ENCODE measurements at regions of chr18 and their contacts with region 1.

Region 1: DNA sequence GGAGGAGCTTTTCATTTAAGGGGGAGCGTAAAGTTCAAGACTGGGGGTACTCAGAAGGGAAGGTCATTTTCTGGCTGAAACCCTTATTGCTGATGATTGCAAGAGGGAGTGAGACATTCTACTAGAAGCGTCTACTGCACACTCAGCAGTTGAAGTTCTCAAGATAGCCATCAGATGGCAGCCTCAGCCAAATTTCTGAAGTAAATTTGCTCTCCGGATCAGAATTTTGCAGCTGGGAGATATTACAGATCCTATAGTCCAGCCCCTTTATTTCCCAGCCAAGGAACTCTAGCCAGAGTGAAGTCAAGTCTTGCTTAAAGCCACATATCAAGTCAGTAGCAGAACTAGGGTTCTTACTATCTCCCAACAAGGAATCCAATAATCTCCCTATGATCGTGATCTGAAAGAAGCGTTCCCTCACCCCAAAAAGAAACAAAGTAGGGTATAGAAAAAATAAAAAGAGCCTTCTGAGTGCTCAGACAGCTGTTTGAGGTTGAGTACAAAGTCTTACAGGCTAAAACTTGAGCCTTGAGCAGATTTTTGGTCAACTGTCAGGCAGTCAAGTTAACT is 24.0 kb downstream of the RAX start:
- DNase-seq: no peak
- H3K4me3 ChIP-seq: no peak overlapping the region
- H3K27ac ChIP-seq: no peak overlapping the region
- H3K4me1 ChIP-seq: no peaks in the 10 kb centered on the region
- H3K27me3 ChIP-seq: peaks cover 0 to 52% (median 17%) of the 10 kb centered on the region in 7 donors
- CTCF ChIP-seq: peak in 10 of 11 experiments; percentile 21 to 70 (median 52)
- POLR2A ChIP-seq: no peak

Region 2: GRCh38 chr18:58552057-58552461 is 697.2 kb before region 1 on chr18:
- intact Hi-C with region 1: no loop called
- DNase-seq: no peak
- H3K4me3 ChIP-seq: no peak overlapping the region
- H3K27ac ChIP-seq: no peak overlapping the region
- H3K4me1 ChIP-seq: peaks cover 0 to 26% (median 1%) of the 10 kb centered on the region in 6 donors
- H3K27me3 ChIP-seq: no peaks in the 10 kb centered on the region
- CTCF ChIP-seq: no peak
- POLR2A ChIP-seq: no peak

Region 3: DNA sequence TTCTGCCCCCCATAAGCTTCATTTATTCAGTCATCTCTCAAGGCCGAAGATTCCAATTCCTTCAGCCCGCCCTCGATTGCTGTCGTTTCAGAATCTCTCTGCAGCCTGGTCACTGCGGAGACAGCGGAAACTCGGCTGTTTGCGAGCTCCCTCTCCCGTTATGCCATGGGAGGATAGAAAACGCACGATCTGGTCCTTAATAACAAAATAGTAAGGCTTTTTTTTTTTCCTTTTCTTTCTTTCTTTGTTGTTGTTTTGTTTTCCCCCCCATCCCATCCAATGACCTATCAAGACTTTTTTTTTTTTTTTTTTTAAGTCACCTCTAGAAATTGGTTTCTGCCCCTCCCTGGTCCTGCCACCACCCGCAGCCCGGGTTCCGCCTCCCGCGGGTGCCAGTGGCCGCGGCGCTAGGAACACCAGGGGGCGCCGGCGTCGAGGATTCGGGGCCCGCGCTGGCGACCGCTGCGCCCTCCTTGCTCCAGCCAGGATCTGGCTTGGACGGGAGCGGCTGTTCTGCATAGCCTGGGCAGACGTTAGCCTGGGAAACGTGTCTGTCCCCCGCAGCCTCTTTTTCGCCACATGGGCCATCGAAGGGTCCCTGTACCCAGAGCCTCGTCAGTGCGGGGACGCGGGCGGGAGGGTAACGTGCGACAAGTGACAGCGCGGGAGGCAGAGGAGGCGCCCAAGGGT is 59.1 kb after region 1 on chr18:
- intact Hi-C with region 1: loop called (anchors 10 kb)
- DNase-seq: peak; percentile 86
- H3K4me3 ChIP-seq: peak overlapping the region in 5 of 8 donors; percentile 12 to 59 (median 37)
- H3K27ac ChIP-seq: no peak overlapping the region
- H3K4me1 ChIP-seq: peaks cover 0 to 15% (median 10%) of the 10 kb centered on the region in 6 donors
- H3K27me3 ChIP-seq: peaks cover 0 to 54% (median 23%) of the 10 kb centered on the region in 7 donors
- CTCF ChIP-seq: peak; percentile 49 to 86 (median 74)
- POLR2A ChIP-seq: no peak